Caco-2 (cell line): ENCODE measurements at regions of chr5 and their contacts with region 1.

Region 1: GRCh38 chr5:78677777-78678668 is 29.5 kb upstream of the LHFPL2 start:
- DNase-seq: peak; percentile 76 to 83
- H3K4me3 ChIP-seq: no peak overlapping the region
- H3K4me3 Mint-ChIP-seq: peak overlapping the region; percentile 42
- H3K27ac Mint-ChIP-seq: peak overlapping the region; percentile 94
- H3K4me1 ChIP-seq: peaks cover 45% of the 10 kb centered on the region
- H3K4me1 Mint-ChIP-seq: peaks cover 30% of the 10 kb centered on the region
- H3K27me3 ChIP-seq: no peaks in the 10 kb centered on the region
- H3K27me3 Mint-ChIP-seq: no peaks in the 10 kb centered on the region
- CTCF ChIP-seq: no peak

Region 2: GRCh38 chr5:78661691-78662090 is 16.3 kb before region 1 on chr5:
- CTCF ChIA-PET with region 1: no interaction called
- POLR2A ChIA-PET with region 1: no interaction called
- intact Hi-C with region 1: no loop called
- DNase-seq: no peak
- H3K4me3 ChIP-seq: no peak overlapping the region
- H3K4me3 Mint-ChIP-seq: no peak overlapping the region
- H3K27ac Mint-ChIP-seq: no peak overlapping the region
- H3K4me1 ChIP-seq: peaks cover 21% of the 10 kb centered on the region
- H3K4me1 Mint-ChIP-seq: peaks cover 7% of the 10 kb centered on the region
- H3K27me3 ChIP-seq: no peaks in the 10 kb centered on the region
- H3K27me3 Mint-ChIP-seq: no peaks in the 10 kb centered on the region
- CTCF ChIP-seq: no peak

Region 3: GRCh38 chr5:78771260-78772205 is 93.5 kb after region 1 on chr5:
- CTCF ChIA-PET with region 1: no interaction called
- POLR2A ChIA-PET with region 1: no interaction called
- intact Hi-C with region 1: loop called (anchors 5 kb)
- DNase-seq: no peak
- H3K4me3 ChIP-seq: no peak overlapping the region
- H3K4me3 Mint-ChIP-seq: peak overlapping the region; percentile 20
- H3K27ac Mint-ChIP-seq: peak overlapping the region; percentile 95
- H3K4me1 ChIP-seq: peaks cover 27% of the 10 kb centered on the region
- H3K4me1 Mint-ChIP-seq: peaks cover 13% of the 10 kb centered on the region
- H3K27me3 ChIP-seq: no peaks in the 10 kb centered on the region
- H3K27me3 Mint-ChIP-seq: no peaks in the 10 kb centered on the region
- CTCF ChIP-seq: no peak

Region 4: DNA sequence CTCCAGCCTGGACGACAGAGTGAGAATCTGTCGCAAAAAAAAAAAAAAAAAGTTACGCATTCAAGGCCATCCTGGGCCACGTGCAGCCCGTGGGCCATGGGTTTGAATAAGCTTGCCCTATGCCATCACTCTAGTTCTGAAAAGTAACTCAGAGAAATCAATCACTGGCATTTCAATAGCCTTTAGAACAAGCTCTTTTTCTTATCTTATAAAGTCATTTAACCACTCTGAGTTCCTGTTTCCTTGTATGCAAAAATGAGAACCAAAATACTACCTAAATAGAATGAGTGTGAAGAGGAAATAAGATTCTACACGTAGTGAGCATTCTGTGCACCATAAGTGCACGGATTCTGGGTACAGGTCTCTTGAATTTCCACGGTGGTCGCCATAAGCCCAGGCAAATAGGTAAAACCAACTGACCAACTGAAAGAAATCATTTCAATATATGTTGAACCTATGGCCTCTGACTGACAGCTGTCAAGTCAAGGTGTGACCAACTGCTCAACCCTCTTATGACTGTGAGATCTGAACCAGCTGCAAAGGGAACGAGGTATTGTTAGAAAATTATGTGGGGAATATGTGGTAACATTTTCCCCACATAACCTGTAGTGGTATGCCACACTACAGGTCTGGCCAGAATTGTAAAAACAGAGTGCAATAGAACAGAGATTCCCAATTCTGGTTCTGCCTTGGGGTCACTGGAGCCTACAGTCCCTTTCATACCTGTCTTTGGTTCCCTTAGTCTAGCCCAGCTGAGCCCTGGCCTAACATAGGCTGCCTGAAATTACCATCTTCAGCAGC is 114.5 kb after region 1 on chr5:
- CTCF ChIA-PET with region 1: no interaction called
- POLR2A ChIA-PET with region 1: no interaction called
- intact Hi-C with region 1: loop called (anchors 5 kb)
- DNase-seq: no peak
- H3K4me3 ChIP-seq: no peak overlapping the region
- H3K4me3 Mint-ChIP-seq: no peak overlapping the region
- H3K27ac Mint-ChIP-seq: no peak overlapping the region
- H3K4me1 ChIP-seq: peaks cover 28% of the 10 kb centered on the region
- H3K4me1 Mint-ChIP-seq: peaks cover 43% of the 10 kb centered on the region
- H3K27me3 ChIP-seq: no peaks in the 10 kb centered on the region
- H3K27me3 Mint-ChIP-seq: no peaks in the 10 kb centered on the region
- CTCF ChIP-seq: no peak